ENCODE measurements at regions of chr18 and their contacts with region 1.

Region 1: GRCh38 chr18:69958422-69958821 is 10.7 kb upstream of the CD226 start:
- DNase-seq: peak in 1 of 5 donors; percentile 71
- H3K4me3 ChIP-seq: no peak overlapping the region
- H3K4me3 Mint-ChIP-seq: peak overlapping the region in 1 of 8 donors; percentile 17
- H3K27ac ChIP-seq: peak overlapping the region; percentile 76
- H3K27ac Mint-ChIP-seq: no peak overlapping the region
- H3K4me1 ChIP-seq: peaks cover 49% of the 10 kb centered on the region
- H3K4me1 Mint-ChIP-seq: peaks cover 1 to 20% (median 16%) of the 10 kb centered on the region in 4 donors
- H3K27me3 ChIP-seq: no peaks in the 10 kb centered on the region
- H3K27me3 Mint-ChIP-seq: no peaks in the 10 kb centered on the region

Region 2: GRCh38 chr18:69845593-69846506 is 112.6 kb before region 1 on chr18:
- CTCF ChIA-PET with region 1: interaction called, 7 read pairs
- POLR2A ChIA-PET with region 1: interaction called, 5 read pairs
- intact Hi-C with region 1: loop called (anchors 2 kb)
- DNase-seq: no peak
- H3K4me3 ChIP-seq: no peak overlapping the region
- H3K4me3 Mint-ChIP-seq: no peak overlapping the region
- H3K27ac ChIP-seq: no peak overlapping the region
- H3K27ac Mint-ChIP-seq: no peak overlapping the region
- H3K4me1 ChIP-seq: no peaks in the 10 kb centered on the region
- H3K4me1 Mint-ChIP-seq: peaks cover 0 to 4% (median 3%) of the 10 kb centered on the region in 4 donors
- H3K27me3 ChIP-seq: no peaks in the 10 kb centered on the region
- H3K27me3 Mint-ChIP-seq: no peaks in the 10 kb centered on the region

Region 3: DNA sequence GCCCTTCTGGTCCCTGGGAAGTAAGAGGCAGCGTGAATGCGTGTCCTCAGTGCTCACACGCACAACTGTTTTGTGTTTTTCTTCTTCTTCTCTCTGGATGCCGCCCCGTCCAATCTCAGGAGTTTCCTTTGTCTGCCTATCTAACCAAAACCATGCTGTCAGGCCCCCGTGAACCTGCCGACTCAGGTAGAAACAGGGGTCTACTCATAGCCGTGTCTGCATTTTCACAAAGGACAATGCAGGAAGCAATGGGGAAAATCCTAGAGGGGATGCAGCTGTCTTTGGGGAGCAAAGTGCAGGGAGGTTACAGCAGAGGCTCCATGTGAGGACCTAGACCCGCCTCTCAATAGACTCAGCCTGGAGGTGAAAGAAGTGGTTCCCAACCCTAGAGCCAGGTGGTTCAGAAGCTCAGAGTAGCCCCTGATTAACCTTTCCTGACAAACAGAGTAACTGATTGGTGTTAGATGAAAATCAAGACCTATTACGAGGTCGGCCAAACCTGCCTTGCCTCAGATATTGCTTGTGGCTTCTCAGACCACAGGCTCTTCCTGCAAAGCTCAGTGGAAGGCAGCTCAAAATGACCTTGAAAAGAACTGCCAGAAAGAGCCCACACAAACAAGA is 60.1 kb before region 1 on chr18:
- CTCF ChIA-PET with region 1: interaction called, 32 read pairs
- POLR2A ChIA-PET with region 1: interaction called, 68 read pairs
- intact Hi-C with region 1: loop called (anchors 1 kb)
- DNase-seq: peak; percentile 20 to 57 (median 28)
- H3K4me3 ChIP-seq: peak overlapping the region; percentile 29 to 54
- H3K4me3 Mint-ChIP-seq: peak overlapping the region; percentile 78 to 91 (median 86)
- H3K27ac ChIP-seq: peak overlapping the region; percentile 64
- H3K27ac Mint-ChIP-seq: peak overlapping the region; percentile 87 to 98 (median 92)
- H3K4me1 ChIP-seq: peaks cover 74% of the 10 kb centered on the region
- H3K4me1 Mint-ChIP-seq: peaks cover 62 to 84% (median 74%) of the 10 kb centered on the region in 4 donors
- H3K27me3 ChIP-seq: no peaks in the 10 kb centered on the region
- H3K27me3 Mint-ChIP-seq: no peaks in the 10 kb centered on the region

Region 4: DNA sequence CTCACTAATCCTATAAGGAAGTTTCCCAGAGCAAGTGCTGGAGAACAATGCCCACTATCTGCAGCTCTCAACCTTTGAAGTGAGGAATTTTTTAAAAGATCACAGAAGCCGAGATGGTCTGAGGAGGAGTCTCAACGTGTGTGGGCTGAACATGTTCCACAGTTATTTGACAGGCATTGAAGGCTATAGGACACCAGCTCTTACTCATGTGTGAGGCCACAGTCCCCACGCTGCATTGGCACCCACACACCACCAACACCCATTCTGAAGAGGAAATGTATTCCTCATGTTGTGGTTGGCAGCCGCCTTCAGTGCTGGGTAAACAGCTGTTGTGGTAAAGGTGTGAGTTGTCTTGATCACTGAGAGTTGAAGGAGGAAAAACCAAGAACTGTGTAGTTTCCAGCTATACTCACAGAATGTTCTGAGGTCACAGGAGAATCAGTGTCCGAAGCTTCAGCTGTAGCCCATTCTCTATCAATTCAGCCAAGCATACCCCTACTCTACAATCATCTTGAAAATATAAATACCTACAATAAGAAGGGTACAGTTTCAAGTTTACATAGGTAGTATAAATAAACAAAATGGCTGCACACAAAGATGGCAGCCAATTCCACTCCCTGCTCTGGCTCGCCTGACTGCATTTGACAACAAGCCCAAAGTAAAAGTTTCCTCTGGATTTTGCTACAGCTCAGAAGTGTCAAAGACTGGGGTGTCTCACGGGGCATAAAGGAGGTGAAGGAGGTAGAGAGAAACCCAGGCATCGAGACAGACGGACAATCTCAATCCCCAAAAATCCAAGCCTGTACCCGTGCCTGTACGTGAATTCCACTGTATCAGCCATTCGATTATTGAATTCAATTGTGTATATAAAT is 22.9 kb before region 1 on chr18:
- CTCF ChIA-PET with region 1: interaction called, 100 read pairs
- POLR2A ChIA-PET with region 1: interaction called, 240 read pairs
- intact Hi-C with region 1: loop called (anchors 1 kb)
- DNase-seq: peak; percentile 86 to 95 (median 89)
- H3K4me3 ChIP-seq: peak overlapping the region in 1 of 2 donors; percentile 25
- H3K4me3 Mint-ChIP-seq: peak overlapping the region in 1 of 8 donors; percentile 45
- H3K27ac ChIP-seq: peak overlapping the region; percentile 42
- H3K27ac Mint-ChIP-seq: no peak overlapping the region
- H3K4me1 ChIP-seq: peaks cover 90% of the 10 kb centered on the region
- H3K4me1 Mint-ChIP-seq: peaks cover under 1 to 45% (median 20%) of the 10 kb centered on the region in 4 donors
- H3K27me3 ChIP-seq: no peaks in the 10 kb centered on the region
- H3K27me3 Mint-ChIP-seq: peaks cover 0 to 2% of the 10 kb centered on the region in 2 donors

Region 5: DNA sequence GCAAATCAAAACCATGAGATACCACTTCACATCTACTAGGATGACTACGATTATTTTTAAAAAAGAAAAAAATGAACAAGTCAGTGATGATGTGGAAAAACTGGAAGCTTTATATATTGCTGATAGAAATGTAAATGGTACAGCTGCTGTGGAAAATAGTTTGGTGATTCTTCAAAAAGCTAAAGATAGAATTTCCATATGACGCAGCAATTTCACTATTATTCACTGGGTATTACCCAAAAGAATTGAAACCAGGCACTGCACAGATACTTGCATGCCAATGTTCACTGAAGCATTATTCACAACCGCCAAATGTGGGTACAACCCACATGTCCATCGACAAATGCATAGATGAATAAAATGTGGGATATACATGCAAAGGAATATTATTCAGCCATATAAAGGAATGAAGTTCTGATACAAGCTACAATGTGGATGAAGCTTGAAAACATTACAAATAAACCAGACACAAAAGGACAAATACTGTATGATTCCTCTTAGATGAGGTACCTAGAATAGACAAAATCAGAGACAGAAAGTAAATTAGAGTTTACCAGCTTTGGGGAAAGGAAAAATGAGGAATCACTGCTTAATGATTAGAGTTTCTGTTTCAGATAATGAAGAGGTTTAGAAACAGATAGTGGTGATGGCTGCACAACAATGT is 235.9 kb after region 1 on chr18:
- CTCF ChIA-PET with region 1: no interaction called
- POLR2A ChIA-PET with region 1: no interaction called
- intact Hi-C with region 1: no loop called
- DNase-seq: no peak
- H3K4me3 ChIP-seq: no peak overlapping the region
- H3K4me3 Mint-ChIP-seq: no peak overlapping the region
- H3K27ac ChIP-seq: no peak overlapping the region
- H3K27ac Mint-ChIP-seq: peak overlapping the region in 2 of 7 donors; percentile 58 to 61
- H3K4me1 ChIP-seq: no peaks in the 10 kb centered on the region
- H3K4me1 Mint-ChIP-seq: peaks cover 1 to 7% (median 5%) of the 10 kb centered on the region in 4 donors
- H3K27me3 ChIP-seq: no peaks in the 10 kb centered on the region
- H3K27me3 Mint-ChIP-seq: no peaks in the 10 kb centered on the region

Region 6: DNA sequence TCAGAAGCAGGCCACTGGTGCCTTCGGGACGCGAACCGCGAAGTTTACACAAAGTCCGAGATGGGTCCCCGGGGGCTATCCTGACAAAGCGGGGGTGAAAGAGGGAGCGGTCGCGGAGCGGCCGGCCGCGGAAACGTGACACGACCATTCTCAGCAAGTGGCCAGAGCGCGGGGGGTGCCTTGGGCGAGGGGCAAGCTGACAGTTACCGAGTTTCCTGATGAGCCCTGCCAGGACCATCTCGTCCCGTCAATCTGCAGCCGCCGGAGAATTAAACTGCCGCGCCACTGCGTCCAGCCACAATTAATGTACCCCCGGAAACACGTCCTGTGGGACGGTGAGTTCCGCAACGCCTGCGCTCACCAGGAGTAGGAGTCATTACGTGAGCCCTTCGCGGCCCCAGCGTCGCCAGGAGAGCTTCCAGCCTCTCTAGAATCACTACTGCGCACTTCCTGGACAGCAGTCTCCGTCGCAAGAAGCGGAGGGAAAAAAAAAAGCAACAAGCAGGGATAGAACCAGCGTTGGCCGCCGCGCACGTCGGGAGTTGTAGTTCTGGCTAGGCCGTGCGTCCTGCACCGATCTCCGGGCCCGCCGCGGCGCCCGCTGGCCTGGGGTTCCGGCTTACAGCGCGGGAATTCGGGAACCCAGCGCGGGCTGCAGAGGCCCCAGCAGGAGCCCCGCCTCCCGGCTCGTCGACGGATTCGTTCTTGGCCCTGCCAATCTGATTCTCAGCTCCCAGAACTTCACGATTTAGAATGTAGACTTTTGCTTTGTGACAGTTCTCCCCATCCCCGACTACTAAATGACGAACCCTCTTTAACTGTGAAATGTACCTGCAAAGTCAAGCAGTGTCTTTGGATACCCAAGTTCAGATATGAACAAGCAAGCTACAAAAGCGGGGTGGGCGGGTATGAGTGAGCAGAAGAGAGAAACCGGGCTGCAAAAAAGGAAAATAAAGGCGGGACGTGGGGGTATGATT is 247.3 kb after region 1 on chr18 and contains the start of gene RTTN:
- CTCF ChIA-PET with region 1: no interaction called
- POLR2A ChIA-PET with region 1: no interaction called
- intact Hi-C with region 1: loop called (anchors 10 kb)
- DNase-seq: peak; percentile 88 to 95 (median 92)
- H3K4me3 ChIP-seq: peak within 1 kb of the TSS; percentile 51 to 92
- H3K4me3 Mint-ChIP-seq: peak within 1 kb of the TSS; percentile 90 to 98 (median 96)
- H3K27ac ChIP-seq: peak within 1 kb of the TSS; percentile 76
- H3K27ac Mint-ChIP-seq: peak within 1 kb of the TSS; percentile 96 to 100 (median 98)
- H3K4me1 ChIP-seq: peaks cover 19% of the 10 kb centered on the region
- H3K4me1 Mint-ChIP-seq: peaks cover 15 to 41% (median 31%) of the 10 kb centered on the region in 4 donors
- H3K27me3 ChIP-seq: no peaks in the 10 kb centered on the region
- H3K27me3 Mint-ChIP-seq: no peaks in the 10 kb centered on the region
- total RNA-seq, gene RTTN: 25.3 to 27.1 TPM